Activated CD4-positive, alpha-beta T cell treated with anti-CD3 and anti-CD28 coated beads for 36 hours (primary cell): ENCODE measurements at regions of chr21 and their contacts with region 1.

Region 1: GRCh38 chr21:14382835-14383594 is at the start of gene HSPA13:
- DNase-seq: peak; percentile 99
- ATAC-seq: peak; percentile 97
- H3K4me3 Mint-ChIP-seq: peak within 1 kb of the TSS; percentile 90
- H3K27ac Mint-ChIP-seq: peak within 1 kb of the TSS; percentile 98
- H3K4me1 Mint-ChIP-seq: peaks cover 29% of the 10 kb centered on the region
- H3K27me3 Mint-ChIP-seq: no peaks in the 10 kb centered on the region
- total RNA-seq, gene HSPA13: 29.5 to 50.2 TPM

Region 2: DNA sequence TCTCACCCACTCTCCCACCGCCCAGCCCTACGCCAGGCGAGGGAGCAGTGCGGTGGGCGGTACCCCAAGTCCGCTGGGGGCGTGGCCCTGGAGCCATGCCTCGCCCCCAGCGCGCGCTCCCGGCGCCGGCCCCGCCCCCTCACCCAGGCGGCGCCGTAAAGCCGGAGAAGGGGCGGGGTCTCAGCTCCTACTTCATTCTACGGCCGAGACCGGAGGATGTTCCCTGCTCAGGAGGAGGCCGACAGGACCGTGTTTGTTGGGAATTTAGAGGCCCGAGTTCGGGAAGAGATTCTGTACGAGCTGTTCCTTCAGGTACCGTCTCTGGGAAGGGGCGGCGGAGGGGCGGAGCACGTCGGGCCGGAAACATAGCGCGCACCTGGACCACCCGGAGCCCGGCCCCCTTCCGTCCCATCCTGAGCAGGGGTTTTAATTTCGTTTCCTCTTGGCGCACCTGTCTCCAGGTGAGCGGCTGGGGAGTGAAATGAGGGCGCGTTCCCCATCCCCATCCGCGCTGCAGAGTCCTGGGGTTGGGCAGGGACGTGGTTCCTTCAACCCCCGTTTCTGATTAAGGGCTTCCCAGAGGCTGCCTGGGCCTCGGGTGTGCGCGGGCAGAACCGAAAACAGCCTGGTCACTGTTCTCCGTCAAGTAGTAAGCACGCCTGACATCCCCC is 166.9 kb before region 1 on chr21 and contains the start of gene RBM11:
- CTCF ChIA-PET with region 1: no interaction called
- POLR2A ChIA-PET with region 1: no interaction called
- intact Hi-C with region 1: loop called in 1 of 2 experiments (anchors 1 kb)
- DNase-seq: peak; percentile 91
- ATAC-seq: peak; percentile 96
- H3K4me3 Mint-ChIP-seq: peak within 1 kb of the TSS; percentile 80
- H3K27ac Mint-ChIP-seq: peak within 1 kb of the TSS; percentile 31
- H3K4me1 Mint-ChIP-seq: peaks cover 6% of the 10 kb centered on the region
- H3K27me3 Mint-ChIP-seq: peaks cover 3% of the 10 kb centered on the region
- total RNA-seq, gene RBM11: 5.1 TPM

Region 3: GRCh38 chr21:14259747-14260146 is 123.3 kb before region 1 on chr21:
- CTCF ChIA-PET with region 1: interaction called, 6 read pairs
- POLR2A ChIA-PET with region 1: no interaction called
- intact Hi-C with region 1: loop called in 1 of 2 experiments (anchors 5 kb)
- DNase-seq: no peak
- ATAC-seq: peak; percentile 33
- H3K4me3 Mint-ChIP-seq: no peak overlapping the region
- H3K27ac Mint-ChIP-seq: no peak overlapping the region
- H3K4me1 Mint-ChIP-seq: peaks cover 5% of the 10 kb centered on the region
- H3K27me3 Mint-ChIP-seq: peaks cover 7% of the 10 kb centered on the region

Region 4: DNA sequence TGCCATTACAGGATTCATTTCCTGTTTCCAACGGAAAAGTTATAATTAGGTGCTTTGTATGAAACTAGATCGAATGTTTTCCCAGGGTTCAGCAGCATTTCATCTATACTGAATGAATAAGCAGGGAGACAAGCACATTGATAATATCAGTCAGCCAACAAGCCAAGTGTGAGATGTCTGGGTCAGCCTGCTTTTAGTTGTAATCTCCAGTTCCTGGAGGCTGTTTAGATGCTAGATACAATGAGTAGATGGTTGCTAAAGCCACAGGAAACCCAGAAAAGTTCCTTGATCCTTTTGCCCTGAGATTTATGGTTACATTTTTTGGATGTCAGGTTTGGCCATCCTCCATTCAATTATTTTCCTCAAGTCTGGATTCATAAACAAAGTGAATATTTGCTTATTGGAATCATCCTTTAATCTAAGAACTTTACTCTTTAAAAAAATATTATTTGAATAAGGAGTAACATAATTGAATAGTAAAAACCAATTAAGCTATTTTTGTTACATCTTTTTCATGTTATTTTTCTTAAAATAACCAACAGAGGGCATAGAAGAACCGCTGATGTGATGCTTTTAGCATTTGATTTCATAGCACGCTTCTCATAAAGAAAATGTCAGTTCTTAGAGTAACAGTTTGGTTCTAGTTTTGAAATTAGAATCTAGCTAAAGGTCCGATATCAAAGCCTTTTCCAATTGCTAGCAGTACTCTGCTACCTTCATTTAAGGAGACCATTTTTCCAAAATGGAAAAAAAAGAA is 76.7 kb before region 1 on chr21:
- CTCF ChIA-PET with region 1: no interaction called
- POLR2A ChIA-PET with region 1: no interaction called
- intact Hi-C with region 1: no loop called
- DNase-seq: no peak
- ATAC-seq: no peak
- H3K4me3 Mint-ChIP-seq: no peak overlapping the region
- H3K27ac Mint-ChIP-seq: no peak overlapping the region
- H3K4me1 Mint-ChIP-seq: no peaks in the 10 kb centered on the region
- H3K27me3 Mint-ChIP-seq: peaks cover 2% of the 10 kb centered on the region

Region 5: DNA sequence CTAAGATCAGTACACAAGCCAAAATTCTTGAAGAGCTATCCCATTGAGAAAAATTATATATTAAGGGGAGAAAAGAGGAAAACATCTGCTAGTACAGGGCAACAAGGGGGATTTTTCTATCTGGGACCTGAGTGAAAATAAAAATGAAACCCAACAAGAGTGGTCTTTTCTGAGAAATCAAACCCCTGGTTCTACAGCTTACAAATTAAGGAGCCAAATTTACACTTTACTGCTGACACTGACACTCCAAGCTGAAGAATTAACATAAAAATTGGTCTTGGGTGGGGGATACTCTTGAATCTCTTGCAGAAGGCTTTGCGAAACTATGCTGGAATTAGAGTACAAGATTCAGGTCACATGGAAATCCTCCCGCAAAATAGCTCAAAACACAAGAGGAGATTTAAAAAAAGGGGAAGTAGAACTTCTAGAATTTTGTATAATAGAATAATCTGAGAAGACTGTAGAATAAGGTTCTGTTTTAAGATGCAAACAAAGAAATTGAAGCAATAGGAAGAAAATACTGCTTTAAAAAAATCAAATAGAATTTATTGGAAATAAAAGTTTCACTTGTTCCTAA is 32.0 kb after region 1 on chr21:
- CTCF ChIA-PET with region 1: no interaction called
- POLR2A ChIA-PET with region 1: no interaction called
- intact Hi-C with region 1: no loop called
- DNase-seq: no peak
- ATAC-seq: no peak
- H3K4me3 Mint-ChIP-seq: no peak overlapping the region
- H3K27ac Mint-ChIP-seq: no peak overlapping the region
- H3K4me1 Mint-ChIP-seq: no peaks in the 10 kb centered on the region
- H3K27me3 Mint-ChIP-seq: peaks cover 2% of the 10 kb centered on the region

Region 6: DNA sequence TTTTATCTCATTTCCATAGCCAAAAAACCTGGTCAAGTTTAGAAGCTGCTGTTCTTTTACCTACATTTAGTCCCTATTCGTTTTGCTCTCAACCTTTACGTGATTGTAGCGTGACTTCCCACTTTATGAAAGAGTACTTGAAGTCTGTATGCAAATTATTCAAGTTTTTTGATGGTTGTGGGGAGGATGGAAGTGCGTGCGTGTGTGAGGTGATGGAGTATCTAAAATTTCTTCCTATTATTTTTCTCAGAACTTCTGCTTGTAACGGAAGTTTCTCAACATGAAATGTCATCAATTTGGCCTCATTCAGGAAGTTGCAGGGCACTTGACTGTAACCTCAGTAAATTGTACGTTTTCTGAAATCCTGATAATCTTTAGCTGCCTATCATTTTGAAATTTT is 99.2 kb after region 1 on chr21:
- CTCF ChIA-PET with region 1: no interaction called
- POLR2A ChIA-PET with region 1: interaction called, 3 read pairs
- intact Hi-C with region 1: loop called in 1 of 2 experiments (anchors 10 kb)
- DNase-seq: peak; percentile 21
- ATAC-seq: peak; percentile 79
- H3K4me3 Mint-ChIP-seq: peak overlapping the region; percentile 42
- H3K27ac Mint-ChIP-seq: peak overlapping the region; percentile 90
- H3K4me1 Mint-ChIP-seq: peaks cover 51% of the 10 kb centered on the region
- H3K27me3 Mint-ChIP-seq: no peaks in the 10 kb centered on the region

Region 7: DNA sequence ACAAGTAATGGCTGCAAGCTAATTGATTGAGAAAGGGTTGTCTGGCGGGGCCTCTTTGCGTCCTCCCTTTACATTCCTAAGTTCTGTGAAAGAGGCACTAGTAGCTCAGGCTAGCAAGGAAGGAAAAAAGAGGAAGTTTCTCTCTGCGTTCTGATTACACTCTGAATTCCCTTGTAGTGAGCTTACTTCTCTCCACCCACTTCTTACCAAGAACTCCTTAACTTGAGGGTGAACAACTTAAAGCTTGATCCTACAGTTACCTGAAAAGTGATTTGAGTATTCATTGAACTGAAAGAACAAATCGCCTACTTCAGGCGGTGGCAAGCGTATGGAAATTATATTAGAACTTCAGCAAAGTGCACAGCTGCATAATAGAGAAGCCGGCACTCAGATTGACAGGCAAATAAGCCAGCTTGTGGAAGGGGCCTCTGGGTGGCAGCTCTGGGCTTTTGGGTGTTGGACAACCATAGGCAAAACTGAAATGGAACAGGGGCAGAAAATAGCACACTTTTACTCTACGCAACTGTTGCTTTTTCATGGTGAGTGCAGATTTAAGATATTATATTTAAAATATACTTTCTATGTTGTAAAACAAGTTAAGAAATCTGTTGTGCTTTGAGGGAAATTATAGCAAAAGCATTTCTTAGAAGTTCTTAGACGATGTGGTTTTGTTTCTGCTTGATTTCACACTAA is 1811.2 kb after region 1 on chr21:
- CTCF ChIA-PET with region 1: no interaction called
- POLR2A ChIA-PET with region 1: no interaction called
- intact Hi-C with region 1: loop called in 1 of 2 experiments (anchors 5 kb)
- DNase-seq: peak; percentile 59
- ATAC-seq: peak; percentile 74
- H3K4me3 Mint-ChIP-seq: peak overlapping the region; percentile 59
- H3K27ac Mint-ChIP-seq: peak overlapping the region; percentile 64
- H3K4me1 Mint-ChIP-seq: peaks cover 14% of the 10 kb centered on the region
- H3K27me3 Mint-ChIP-seq: no peaks in the 10 kb centered on the region